ENCODE measurements at regions of chr4 and their contacts with region 1.

Region 1: GRCh38 chr4:89226665-89227574 is 80.7 kb downstream of the GPRIN3 start:
- DNase-seq: peak; percentile 80 to 90 (median 84)
- H3K4me3 ChIP-seq: peak overlapping the region in 1 of 7 experiments; percentile 40
- H3K27ac ChIP-seq: no peak overlapping the region
- H3K4me1 ChIP-seq: peaks cover 0 to 3% (median 1%) of the 10 kb centered on the region in 4 experiments
- H3K27me3 ChIP-seq: no peaks in the 10 kb centered on the region

Region 2: DNA sequence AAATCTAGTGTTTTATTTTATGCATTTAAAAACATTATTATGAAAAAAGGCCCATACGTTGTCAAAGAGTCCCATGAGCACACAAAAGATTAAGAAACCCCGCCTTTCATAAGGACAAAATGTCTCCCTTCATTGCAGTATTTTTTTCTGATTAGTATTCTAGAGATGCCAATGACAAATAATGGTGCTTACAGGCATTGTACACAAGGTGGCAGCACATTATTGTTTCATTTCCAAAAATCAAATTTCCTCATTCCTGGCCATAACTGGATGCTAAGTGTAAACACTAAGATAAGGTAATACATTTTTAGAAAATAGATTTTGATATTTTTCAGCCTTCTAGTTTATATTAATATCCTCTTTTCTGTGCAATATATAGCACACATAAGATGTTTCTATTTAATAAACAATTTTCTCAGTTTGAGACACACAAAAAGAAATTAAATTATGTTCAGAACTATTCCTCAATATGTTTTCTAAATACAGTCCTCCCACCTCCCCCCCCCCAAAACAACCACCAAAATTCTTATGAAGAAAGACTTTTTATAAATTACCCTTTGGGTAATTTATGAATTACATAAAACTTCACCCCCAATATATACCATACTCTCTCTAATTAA is 67.9 kb before region 1 on chr4:
- CTCF ChIA-PET with region 1: interaction called, 10 read pairs
- POLR2A ChIA-PET with region 1: no interaction called
- DNase-seq: peak; percentile 46 to 67 (median 64)
- H3K4me3 ChIP-seq: no peak overlapping the region
- H3K27ac ChIP-seq: no peak overlapping the region
- H3K4me1 ChIP-seq: no peaks in the 10 kb centered on the region
- H3K27me3 ChIP-seq: no peaks in the 10 kb centered on the region

Region 3: GRCh38 chr4:89164400-89164799 is 62.5 kb before region 1 on chr4:
- CTCF ChIA-PET with region 1: interaction called, 10 read pairs
- POLR2A ChIA-PET with region 1: no interaction called
- DNase-seq: peak in 1 of 3 donors; percentile 6
- H3K4me3 ChIP-seq: no peak overlapping the region
- H3K27ac ChIP-seq: no peak overlapping the region
- H3K4me1 ChIP-seq: no peaks in the 10 kb centered on the region
- H3K27me3 ChIP-seq: no peaks in the 10 kb centered on the region

Region 4: GRCh38 chr4:89216866-89217265 is 10.1 kb before region 1 on chr4:
- CTCF ChIA-PET with region 1: interaction called, 18 read pairs
- POLR2A ChIA-PET with region 1: no interaction called
- DNase-seq: no peak
- H3K4me3 ChIP-seq: no peak overlapping the region
- H3K27ac ChIP-seq: no peak overlapping the region
- H3K4me1 ChIP-seq: peaks cover 0 to 11% (median 1%) of the 10 kb centered on the region in 4 experiments
- H3K27me3 ChIP-seq: no peaks in the 10 kb centered on the region

Region 5: DNA sequence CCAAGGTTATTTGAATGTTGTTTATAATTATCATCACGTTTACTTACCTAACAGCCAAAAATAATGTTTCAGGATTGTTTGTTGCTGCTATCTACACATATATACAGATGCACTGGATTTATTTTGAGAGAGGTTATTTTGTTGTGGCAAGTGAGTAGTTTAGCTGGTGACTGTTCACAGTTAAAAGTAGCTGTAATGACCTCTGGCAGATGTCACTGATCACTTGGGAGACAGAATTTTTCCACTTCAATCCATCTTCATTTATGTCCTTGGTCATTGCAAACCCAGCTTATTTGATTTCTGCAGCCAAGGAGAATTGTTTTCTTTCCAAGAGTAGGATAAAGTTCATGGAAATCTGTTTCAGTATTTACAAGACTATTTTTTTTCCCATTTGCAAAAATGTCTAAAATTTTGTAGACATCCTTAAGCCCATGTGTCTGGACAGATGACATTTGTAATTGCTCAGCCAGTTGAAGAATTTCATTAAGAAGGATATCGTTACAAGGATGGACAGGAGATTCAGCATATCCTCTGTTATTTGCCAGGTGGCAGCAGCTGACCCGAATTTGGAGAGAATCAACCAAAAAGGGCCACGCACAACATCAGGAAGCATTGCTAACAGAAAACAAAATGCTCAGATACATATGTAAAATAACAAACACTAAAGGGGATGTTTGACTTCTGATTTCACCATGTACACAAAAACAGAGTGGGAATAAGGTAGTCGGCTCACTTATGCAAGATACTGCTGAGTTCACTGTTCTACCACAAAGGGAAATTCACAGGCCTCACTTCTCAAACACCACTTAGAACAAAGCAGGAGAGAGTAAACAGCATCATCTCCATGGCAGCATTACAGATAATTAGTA is 16.2 kb after region 1 on chr4:
- CTCF ChIA-PET with region 1: interaction called, 12 read pairs
- POLR2A ChIA-PET with region 1: interaction called, 5 read pairs
- DNase-seq: peak; percentile 48 to 93 (median 90)
- H3K4me3 ChIP-seq: peak overlapping the region in 1 of 7 experiments; percentile 14
- H3K27ac ChIP-seq: peak overlapping the region; percentile 80 to 87
- H3K4me1 ChIP-seq: peaks cover 4 to 15% (median 10%) of the 10 kb centered on the region in 4 experiments
- H3K27me3 ChIP-seq: no peaks in the 10 kb centered on the region

Region 6: DNA sequence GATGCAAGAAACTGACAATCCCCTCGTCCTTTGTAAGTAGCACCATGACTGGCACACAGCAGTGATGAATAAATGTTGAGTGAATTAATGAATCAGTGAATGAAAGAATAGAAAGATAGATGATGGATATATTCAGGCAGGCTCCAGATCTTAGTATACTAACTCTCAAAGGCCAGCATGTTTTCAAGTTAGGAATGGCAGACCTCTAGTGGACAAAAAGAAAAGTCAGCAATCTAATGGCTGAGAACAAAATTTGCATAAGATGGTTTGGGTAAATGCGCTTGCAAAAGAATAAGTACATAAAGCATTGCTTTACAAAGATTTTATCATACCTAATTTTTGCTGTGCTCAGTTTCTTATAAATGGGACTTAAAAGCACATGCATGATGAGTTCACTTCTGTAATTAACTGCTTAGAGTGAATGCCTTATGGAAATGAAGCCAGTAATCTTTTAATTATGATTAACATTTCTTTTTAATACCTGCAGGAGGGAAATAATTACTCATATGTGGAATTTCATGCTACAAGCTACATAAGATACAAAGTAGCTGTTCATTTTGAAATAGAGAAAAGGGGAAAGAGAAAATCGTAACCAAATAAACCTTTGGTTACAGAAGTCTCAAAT is 207.6 kb after region 1 on chr4:
- CTCF ChIA-PET with region 1: interaction called, 47 read pairs
- POLR2A ChIA-PET with region 1: no interaction called
- DNase-seq: peak; percentile 34 to 68 (median 63)
- H3K4me3 ChIP-seq: no peak overlapping the region
- H3K27ac ChIP-seq: no peak overlapping the region
- H3K4me1 ChIP-seq: peaks cover 0 to 12% (median 6%) of the 10 kb centered on the region in 4 experiments
- H3K27me3 ChIP-seq: no peaks in the 10 kb centered on the region